ENCODE measurements at regions of chr16 and their contacts with region 1.

Region 1: GRCh38 chr16:56970934-56971767 is 9.4 kb downstream of the CETP start:
- DNase-seq: no peak
- H3K4me3 ChIP-seq: no peak overlapping the region
- H3K27ac ChIP-seq: no peak overlapping the region
- H3K4me1 ChIP-seq: no peaks in the 10 kb centered on the region
- H3K27me3 ChIP-seq: no peaks in the 10 kb centered on the region
- CTCF ChIP-seq: no peak
- POLR2A ChIP-seq: no peak

Region 2: GRCh38 chr16:56911771-56912571 is 59.2 kb before region 1 on chr16:
- intact Hi-C with region 1: loop called (anchors 10 kb)
- DNase-seq: no peak
- H3K4me3 ChIP-seq: no peak overlapping the region
- H3K27ac ChIP-seq: peak overlapping the region in 1 of 2 donors; percentile 94
- H3K4me1 ChIP-seq: peaks cover 49% of the 10 kb centered on the region
- H3K27me3 ChIP-seq: no peaks in the 10 kb centered on the region
- CTCF ChIP-seq: no peak
- POLR2A ChIP-seq: no peak

Measured in prostate gland (tissue), 2 donors.